ENCODE measurements at regions of chrX and their contacts with region 1.

Region 1: GRCh38 chrX:19990556-19991349 is at the start of gene BCLAF3:
- DNase-seq: peak; percentile 85 to 94 (median 91)
- H3K4me3 ChIP-seq: peak within 1 kb of the TSS; percentile 59
- H3K27ac ChIP-seq: peak within 1 kb of the TSS; percentile 47 to 54
- H3K4me1 ChIP-seq: no peaks in the 10 kb centered on the region
- H3K27me3 ChIP-seq: no peaks in the 10 kb centered on the region
- CTCF ChIP-seq: peak; percentile 66 to 85 (median 82)
- EP300 ChIP-seq: no peak
- POLR2A ChIP-seq: no peak
- total RNA-seq, gene BCLAF3: 8.0 to 19.1 (median 12.3) TPM

Region 2: DNA sequence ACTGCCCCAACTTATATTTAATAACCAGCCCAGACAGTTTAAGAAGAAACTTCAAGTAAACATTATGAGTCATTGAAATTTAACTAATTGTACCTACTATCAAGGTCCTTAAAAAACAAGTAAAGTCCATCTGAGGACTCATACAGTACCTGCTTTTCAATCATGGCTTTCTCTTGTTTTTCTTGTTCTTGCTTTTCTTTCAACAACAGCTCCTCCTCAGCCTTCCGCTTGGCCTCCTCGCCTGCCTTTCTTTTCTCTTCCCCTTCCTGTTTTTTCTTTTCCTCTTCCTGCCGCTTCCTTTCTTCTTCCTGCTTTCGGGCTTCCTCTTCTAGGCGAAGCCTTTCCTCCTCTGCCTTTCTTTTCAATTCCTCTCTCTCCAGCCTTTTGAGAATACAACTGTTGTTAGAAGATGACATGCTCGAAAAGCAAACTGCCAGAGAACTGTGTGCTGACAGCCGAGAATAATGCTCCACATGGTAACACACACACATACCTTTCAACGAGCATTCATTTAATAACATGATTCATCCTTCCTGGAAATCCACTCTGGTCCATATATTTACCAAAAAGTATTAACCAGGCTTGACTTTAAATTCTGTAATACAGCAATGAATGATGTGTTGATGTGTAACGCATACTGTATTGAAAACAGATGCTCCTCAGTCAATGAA is 25.3 kb after region 1 on chrX:
- intact Hi-C with region 1: loop called in 1 of 4 experiments (anchors 1 kb)
- DNase-seq: no peak
- H3K4me3 ChIP-seq: no peak overlapping the region
- H3K27ac ChIP-seq: no peak overlapping the region
- H3K4me1 ChIP-seq: no peaks in the 10 kb centered on the region
- H3K27me3 ChIP-seq: no peaks in the 10 kb centered on the region
- CTCF ChIP-seq: no peak
- EP300 ChIP-seq: no peak
- POLR2A ChIP-seq: no peak

Measured in ovary (tissue), 10 donors.